ENCODE measurements at regions of chr17 and their contacts with region 1.

Region 1: DNA sequence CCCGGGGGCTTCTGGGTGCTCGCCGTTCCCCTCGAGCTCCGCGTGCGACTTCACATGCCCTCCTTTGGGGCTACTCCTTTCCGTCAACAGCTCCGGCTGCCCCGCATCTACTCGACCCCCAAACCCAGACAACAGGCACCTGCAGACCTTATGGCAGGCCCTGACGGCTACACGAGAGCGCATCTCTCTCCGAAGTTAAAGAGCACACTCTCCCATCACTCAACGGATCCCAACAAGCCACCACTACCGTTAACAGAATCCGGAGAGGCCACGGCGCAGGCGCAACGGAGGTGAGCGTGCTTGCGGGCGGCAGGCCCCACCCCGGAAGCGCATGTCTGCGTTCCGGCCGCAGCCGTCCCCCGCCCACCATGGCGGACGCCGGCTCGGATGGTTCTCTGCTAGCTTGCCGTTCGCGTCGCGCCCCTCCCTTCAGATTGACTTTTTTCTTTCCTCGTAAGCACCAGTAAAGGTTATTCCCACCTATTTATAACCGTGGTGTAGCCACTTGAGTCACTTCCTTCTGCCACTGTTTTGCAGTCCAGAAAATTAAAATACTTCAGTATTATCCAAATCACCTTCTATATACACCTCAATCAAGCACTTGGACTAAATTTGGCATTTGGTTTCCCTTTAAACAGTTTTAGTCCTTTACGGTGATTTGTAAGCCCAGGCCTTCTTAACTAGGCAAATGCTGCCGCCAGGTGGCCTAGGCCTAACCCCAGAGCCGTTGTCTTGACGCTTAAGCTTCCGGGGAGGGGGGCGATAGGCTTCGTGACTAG is at the start of gene POLG2:
- DNase-seq: peak; percentile 96
- H3K4me3 ChIP-seq: peak within 1 kb of the TSS; percentile 87
- H3K27ac ChIP-seq: peak within 1 kb of the TSS; percentile 96
- H3K4me1 ChIP-seq: peaks cover 63% of the 10 kb centered on the region
- CTCF ChIP-seq: peak; percentile 86
- total RNA-seq, gene POLG2: 22.9 and 31.4 TPM in 2 replicates

Region 2: GRCh38 chr17:63931099-63931561 is 565.8 kb before region 1 on chr17:
- CTCF ChIA-PET with region 1: no interaction called
- POLR2A ChIA-PET with region 1: no interaction called
- intact Hi-C with region 1: loop called (anchors 5 kb)
- DNase-seq: peak; percentile 83
- H3K4me3 ChIP-seq: peak overlapping the region; percentile 98
- H3K27ac ChIP-seq: peak overlapping the region; percentile 99
- H3K4me1 ChIP-seq: peaks cover 73% of the 10 kb centered on the region
- CTCF ChIP-seq: no peak

Region 3: DNA sequence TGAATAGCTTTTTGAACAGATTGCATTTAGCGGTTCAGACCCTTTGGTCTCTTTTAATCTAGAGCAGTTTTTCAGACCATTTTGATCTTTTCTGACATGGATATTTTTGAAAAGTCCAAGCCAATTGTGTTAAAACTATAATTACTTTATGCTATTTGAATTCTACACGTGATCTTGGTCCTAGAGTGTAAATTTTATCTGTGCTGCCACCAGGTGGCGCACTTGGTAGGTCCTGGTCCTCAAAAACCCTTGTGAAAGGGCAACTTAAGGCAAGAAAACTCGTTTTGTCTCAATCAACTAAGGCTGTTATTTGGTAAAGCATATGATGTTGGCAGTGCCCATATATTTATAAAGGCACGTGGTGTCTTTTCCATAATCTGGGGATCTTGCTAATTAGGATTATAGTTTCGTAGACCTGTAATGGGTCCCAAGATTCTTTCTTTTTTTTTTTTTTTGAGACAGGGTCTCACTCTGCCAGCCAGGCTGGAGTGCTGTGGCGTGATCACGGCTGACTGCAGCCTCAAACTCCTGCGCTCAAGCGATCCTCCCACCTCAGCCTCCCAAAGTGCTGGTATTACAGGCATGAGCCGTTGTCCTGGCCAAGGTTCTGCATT is 190.0 kb before region 1 on chr17:
- CTCF ChIA-PET with region 1: no interaction called
- POLR2A ChIA-PET with region 1: no interaction called
- intact Hi-C with region 1: loop called (anchors 1 kb)
- DNase-seq: peak; percentile 81
- H3K4me3 ChIP-seq: no peak overlapping the region
- H3K27ac ChIP-seq: no peak overlapping the region
- H3K4me1 ChIP-seq: no peaks in the 10 kb centered on the region
- CTCF ChIP-seq: peak; percentile 97

Region 4: DNA sequence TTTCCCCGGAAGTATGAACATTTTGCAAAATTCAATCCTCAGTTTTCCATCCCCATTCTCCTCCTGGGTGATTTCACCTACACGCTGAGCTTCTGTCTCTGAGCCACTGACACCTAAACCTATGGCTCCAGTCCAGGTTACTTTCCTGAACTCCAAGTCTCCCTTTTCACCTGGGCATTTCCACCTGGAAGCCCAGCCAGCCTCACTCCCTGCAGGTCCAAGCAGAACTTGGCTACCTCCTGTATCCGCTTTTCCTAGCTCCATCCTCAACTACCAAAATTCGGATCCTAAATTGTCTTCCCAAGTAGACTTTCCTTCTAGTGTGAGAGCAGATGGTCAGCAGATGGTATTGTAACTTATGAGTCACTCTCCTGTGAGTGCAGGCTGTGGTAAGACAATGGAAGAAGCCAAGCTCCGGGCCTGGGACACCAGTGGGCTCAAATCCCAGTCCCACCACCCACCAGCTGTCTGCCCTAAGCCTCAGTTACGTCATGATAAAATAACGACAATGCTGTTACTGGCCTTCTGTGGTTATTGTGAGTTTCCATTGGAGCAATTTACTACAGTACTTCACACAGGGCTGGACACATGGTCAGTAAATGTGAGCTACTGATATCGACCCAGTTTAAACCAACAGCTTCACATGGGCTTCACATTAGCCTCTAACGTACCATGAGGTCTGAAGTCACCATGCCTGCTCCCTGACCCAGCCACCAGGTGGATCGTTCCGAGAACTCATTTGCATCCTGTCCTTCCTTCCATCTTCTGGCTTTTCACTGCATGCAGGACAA is 139.6 kb before region 1 on chr17:
- CTCF ChIA-PET with region 1: no interaction called
- POLR2A ChIA-PET with region 1: no interaction called
- intact Hi-C with region 1: no loop called
- DNase-seq: no peak
- H3K4me3 ChIP-seq: no peak overlapping the region
- H3K27ac ChIP-seq: no peak overlapping the region
- H3K4me1 ChIP-seq: no peaks in the 10 kb centered on the region
- CTCF ChIP-seq: no peak

Region 5: DNA sequence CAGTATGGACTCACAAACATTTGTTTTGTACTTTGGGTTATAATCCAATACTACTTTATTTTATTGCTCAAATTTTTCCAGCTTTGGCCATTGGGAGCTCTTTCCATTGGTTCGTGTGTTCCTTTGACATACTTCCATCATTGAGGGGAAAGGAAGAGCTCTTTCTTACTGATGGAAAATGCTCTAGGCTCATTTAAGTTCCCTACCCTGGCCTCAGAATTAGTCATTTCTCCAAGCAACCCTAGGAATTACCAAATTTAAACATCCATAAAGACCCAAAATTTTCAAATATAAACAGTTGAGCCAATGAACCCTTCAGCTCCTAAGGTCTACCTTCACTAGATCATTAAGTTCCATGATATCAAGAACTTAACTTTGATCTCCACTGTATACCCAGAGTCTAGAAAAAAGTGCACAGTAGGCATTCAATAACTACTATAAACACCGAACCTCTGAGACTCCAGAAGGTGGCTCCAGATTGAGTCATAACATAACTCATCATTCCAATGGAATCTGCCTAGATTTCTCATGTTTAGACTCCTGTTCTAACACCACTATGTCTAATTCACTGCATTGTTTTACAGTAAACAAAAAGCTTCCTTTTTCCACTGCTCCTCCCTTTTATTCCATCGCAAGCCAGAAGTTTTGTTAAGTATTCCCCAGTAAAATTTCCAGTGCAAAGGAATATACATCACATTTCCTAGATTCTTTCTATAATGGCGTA is 126.1 kb after region 1 on chr17:
- CTCF ChIA-PET with region 1: no interaction called
- POLR2A ChIA-PET with region 1: no interaction called
- intact Hi-C with region 1: no loop called
- DNase-seq: no peak
- H3K4me3 ChIP-seq: no peak overlapping the region
- H3K27ac ChIP-seq: no peak overlapping the region
- H3K4me1 ChIP-seq: no peaks in the 10 kb centered on the region
- CTCF ChIP-seq: no peak

Region 6: DNA sequence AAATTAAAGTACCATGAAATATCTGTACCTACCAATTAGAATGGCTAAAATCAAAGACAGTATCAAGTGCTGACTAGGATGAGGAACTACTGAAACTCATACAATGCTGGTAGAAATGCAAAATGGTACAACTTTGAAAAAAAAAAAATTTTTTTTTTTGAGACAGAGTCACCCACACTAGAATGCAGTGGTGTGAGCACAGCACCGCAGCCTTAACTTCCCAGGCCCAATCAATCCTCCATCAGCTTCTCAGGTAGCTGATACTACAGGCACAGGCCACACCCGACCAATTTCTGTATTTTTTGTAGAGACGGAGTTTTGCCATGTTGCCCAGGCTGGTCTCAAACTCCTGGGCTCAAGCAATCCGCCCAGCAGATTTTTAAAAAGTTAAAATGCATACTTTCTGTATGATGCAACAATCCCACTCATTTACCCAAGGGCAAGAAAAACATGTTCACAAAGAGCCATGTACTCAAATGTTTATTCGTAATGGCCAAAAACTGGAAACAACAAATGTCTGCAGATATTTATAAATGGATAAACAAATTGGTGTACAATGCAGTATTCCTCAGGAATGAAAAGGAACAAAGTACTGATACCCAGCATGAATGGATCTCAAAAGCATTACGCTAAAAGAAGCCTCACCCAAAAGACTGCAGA is 156.5 kb after region 1 on chr17:
- CTCF ChIA-PET with region 1: no interaction called
- POLR2A ChIA-PET with region 1: no interaction called
- intact Hi-C with region 1: loop called (anchors 1 kb)
- DNase-seq: no peak
- H3K4me3 ChIP-seq: no peak overlapping the region
- H3K27ac ChIP-seq: no peak overlapping the region
- H3K4me1 ChIP-seq: peaks cover 8% of the 10 kb centered on the region
- CTCF ChIP-seq: no peak